HCT116 (cell line): ENCODE measurements at regions of chr5 and their contacts with region 1.

Region 1: DNA sequence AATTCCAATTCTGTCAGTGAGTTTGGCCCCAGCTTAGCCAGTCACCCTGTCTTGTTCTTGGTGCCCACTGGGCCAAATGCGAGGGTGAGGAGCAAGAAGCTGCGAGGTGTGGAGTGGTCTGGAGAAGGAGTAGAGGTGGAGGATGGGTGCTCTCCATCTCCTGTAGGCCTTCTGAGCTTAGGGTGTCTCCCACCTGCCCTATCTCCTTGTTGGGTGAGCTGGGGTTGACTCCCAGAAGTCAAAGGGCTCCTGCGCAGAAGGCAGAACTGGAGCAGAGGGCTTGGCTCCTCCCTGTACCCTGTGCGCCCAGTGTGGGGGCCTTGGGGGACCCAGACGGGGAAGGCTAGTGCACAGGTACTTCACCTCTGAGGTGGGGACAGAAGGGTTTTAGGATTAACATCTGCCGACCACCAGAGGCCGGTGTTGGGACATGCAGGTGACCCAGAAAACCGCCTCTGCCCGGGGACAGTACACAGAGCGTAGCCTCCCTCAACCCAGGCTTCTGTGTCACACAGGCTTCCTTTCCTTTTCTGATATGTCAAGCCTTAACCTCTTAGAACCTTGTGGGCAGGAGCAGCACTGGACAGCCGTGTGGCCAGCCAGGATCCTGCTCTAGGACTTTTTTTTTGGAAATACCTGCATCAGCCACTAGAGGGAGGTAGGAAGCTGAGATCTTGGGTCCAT is 16.9 kb downstream of the IL5 start:
- DNase-seq: peak; percentile 44
- ATAC-seq: peak; percentile 96
- H3K4me3 ChIP-seq: peak overlapping the region in 1 of 2 experiments; percentile 37; a peak in 1 of 4 replicates
- H3K27ac ChIP-seq: no peak overlapping the region
- H3K4me1 ChIP-seq: peaks cover 0 to 9% of the 10 kb centered on the region in 2 experiments; a peak in 1 of 4 replicates
- H3K27me3 ChIP-seq: no peaks in the 10 kb centered on the region
- CTCF ChIP-seq: peak; percentile 78 to 99 (median 98)
- POLR2A ChIP-seq: no peak
- RAD21 ChIP-seq: peak; percentile 75

Region 2: GRCh38 chr5:132064738-132065331 is 461.6 kb before region 1 on chr5:
- CTCF ChIA-PET with region 1: no interaction called
- POLR2A ChIA-PET with region 1: no interaction called
- RAD21 ChIA-PET with region 1: no interaction called
- intact Hi-C with region 1: no loop called
- DNase-seq: peak; percentile 71
- ATAC-seq: peak; percentile 86
- H3K4me3 ChIP-seq: no peak overlapping the region
- H3K27ac ChIP-seq: peak overlapping the region; percentile 8; the same call in 1 of the 2 replicates
- H3K4me1 ChIP-seq: peaks cover 0 to 4% of the 10 kb centered on the region in 2 experiments; a peak in 1 of 4 replicates
- H3K27me3 ChIP-seq: no peaks in the 10 kb centered on the region
- CTCF ChIP-seq: peak; percentile 75 to 98 (median 93)
- POLR2A ChIP-seq: no peak
- RAD21 ChIP-seq: peak; percentile 78

Region 3: GRCh38 chr5:132378580-132378979 is 147.9 kb before region 1 on chr5:
- CTCF ChIA-PET with region 1: no interaction called
- POLR2A ChIA-PET with region 1: no interaction called
- RAD21 ChIA-PET with region 1: no interaction called
- intact Hi-C with region 1: no loop called
- DNase-seq: no peak
- ATAC-seq: no peak
- H3K4me3 ChIP-seq: no peak overlapping the region
- H3K27ac ChIP-seq: no peak overlapping the region
- H3K4me1 ChIP-seq: no peaks in the 10 kb centered on the region
- H3K27me3 ChIP-seq: no peaks in the 10 kb centered on the region
- CTCF ChIP-seq: no peak
- POLR2A ChIP-seq: no peak
- RAD21 ChIP-seq: no peak

Region 4: DNA sequence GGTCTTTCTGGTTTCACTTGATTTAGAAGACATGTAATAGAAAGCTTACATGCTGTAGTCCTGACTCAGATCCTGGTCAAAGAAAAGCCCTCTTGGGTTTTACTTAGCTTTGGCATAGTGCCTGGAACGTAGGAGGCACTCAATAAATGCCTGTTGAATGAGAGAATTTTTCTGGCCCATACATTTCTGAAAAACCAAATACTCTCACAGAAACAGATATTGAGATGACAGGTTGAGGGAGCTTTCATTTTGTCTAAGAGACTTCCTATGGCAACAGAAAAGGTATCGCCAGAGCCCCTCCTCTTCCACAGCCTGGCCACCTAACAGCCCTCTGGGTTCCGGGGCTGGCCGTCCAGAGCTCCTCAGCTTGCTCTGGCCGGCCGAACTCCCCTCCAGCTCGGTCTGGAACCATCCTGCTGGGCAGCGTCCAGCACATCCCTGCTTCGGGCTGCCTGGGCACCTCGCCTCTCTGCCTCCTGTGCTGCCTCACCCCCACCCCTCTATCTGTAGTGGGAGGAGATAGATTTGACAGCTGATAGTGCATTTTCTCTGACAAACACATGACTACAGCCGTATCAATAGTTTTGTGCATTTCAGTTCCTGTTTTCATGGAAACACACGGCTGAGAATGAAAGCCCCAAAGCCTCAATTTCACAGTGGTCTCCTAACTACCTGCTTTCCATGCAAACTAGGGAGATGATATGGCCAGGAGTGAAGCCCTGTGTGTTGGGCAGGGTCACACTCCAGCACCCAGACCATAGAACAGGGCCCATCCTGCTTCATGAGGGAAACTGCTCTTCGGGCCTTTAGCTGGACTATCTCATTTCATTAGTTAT is 148.5 kb after region 1 on chr5:
- CTCF ChIA-PET with region 1: interaction called, 3 read pairs
- POLR2A ChIA-PET with region 1: no interaction called
- RAD21 ChIA-PET with region 1: no interaction called
- intact Hi-C with region 1: loop called (anchors 10 kb)
- DNase-seq: peak; percentile 26
- ATAC-seq: no peak
- H3K4me3 ChIP-seq: 0 out of 4 replicates have a peak overlapping the region, but pooled peaks of 1 of the 2 experiments have one; percentile 1
- H3K27ac ChIP-seq: no peak overlapping the region
- H3K4me1 ChIP-seq: peaks cover 24 to 34% of the 10 kb centered on the region in 2 experiments
- H3K27me3 ChIP-seq: no peaks in the 10 kb centered on the region
- CTCF ChIP-seq: no peak
- POLR2A ChIP-seq: no peak
- RAD21 ChIP-seq: no peak

Region 5: GRCh38 chr5:132714456-132715307 is 188.2 kb after region 1 on chr5:
- CTCF ChIA-PET with region 1: no interaction called
- POLR2A ChIA-PET with region 1: no interaction called
- RAD21 ChIA-PET with region 1: no interaction called
- intact Hi-C with region 1: loop called (anchors 10 kb)
- DNase-seq: no peak
- ATAC-seq: peak; percentile 38; the same call in 1 of the 2 replicates
- H3K4me3 ChIP-seq: no peak overlapping the region
- H3K27ac ChIP-seq: no peak overlapping the region
- H3K4me1 ChIP-seq: no peaks in the 10 kb centered on the region
- H3K27me3 ChIP-seq: no peaks in the 10 kb centered on the region
- CTCF ChIP-seq: peak; percentile 27 to 60 (median 30); a peak in 4 of 6 replicates
- POLR2A ChIP-seq: no peak
- RAD21 ChIP-seq: peak; percentile 40